ENCODE measurements at regions of chr16 and their contacts with region 1.

Region 1: DNA sequence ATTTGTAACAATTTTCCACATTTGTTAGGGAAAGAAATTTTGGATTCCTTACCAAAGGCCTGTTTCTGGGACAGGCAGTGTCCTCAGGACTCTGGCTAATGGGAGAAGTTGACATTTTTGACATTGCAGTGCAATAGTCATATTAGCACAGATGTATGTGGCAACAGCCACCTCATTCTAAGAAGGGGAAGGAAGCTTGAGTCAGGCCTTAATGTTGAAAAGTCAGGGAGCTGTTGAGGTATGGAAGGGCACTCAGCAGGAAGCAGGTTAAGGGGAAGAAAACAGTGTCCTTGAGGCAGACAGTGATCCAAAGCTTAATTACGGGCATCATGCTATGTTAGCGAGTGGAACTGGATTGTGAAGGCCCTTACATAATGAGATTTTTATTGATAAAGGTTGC is 20.9 kb downstream of the AKTIP start:
- DNase-seq: no peak
- ATAC-seq: no peak
- H3K4me3 ChIP-seq: no peak overlapping the region
- H3K27ac ChIP-seq: no peak overlapping the region
- H3K4me1 ChIP-seq: no peaks in the 10 kb centered on the region
- H3K27me3 ChIP-seq: no peaks in the 10 kb centered on the region
- CTCF ChIP-seq: no peak
- POLR2A ChIP-seq: no peak

Region 2: GRCh38 chr16:53449632-53450517 is 32.2 kb before region 1 on chr16:
- in situ Hi-C with region 1: no loop called
- intact Hi-C with region 1: loop called (anchors 5 kb)
- DNase-seq: no peak
- ATAC-seq: no peak
- H3K4me3 ChIP-seq: no peak overlapping the region
- H3K27ac ChIP-seq: no peak overlapping the region
- H3K4me1 ChIP-seq: no peaks in the 10 kb centered on the region
- H3K27me3 ChIP-seq: no peaks in the 10 kb centered on the region
- CTCF ChIP-seq: no peak
- POLR2A ChIP-seq: no peak